Activated B cell treated with CpG ODN at 0.5 μM for 24 hours (primary cell): ENCODE measurements at regions of chr10 and their contacts with region 1.

Region 1: GRCh38 chr10:103995134-103995533 is 28.2 kb downstream of the SLK start:
- DNase-seq: no peak
- ATAC-seq: no peak
- H3K4me3 Mint-ChIP-seq: no peak overlapping the region
- H3K27ac Mint-ChIP-seq: no peak overlapping the region
- H3K4me1 Mint-ChIP-seq: peaks cover 1% of the 10 kb centered on the region
- H3K27me3 Mint-ChIP-seq: no peaks in the 10 kb centered on the region
- CTCF ChIP-seq: no peak

Region 2: GRCh38 chr10:103911021-103911459 is 84.1 kb before region 1 on chr10:
- CTCF ChIA-PET with region 1: no interaction called
- POLR2A ChIA-PET with region 1: interaction called, 14 read pairs
- intact Hi-C with region 1: no loop called
- DNase-seq: no peak
- ATAC-seq: peak; percentile 42
- H3K4me3 Mint-ChIP-seq: no peak overlapping the region
- H3K27ac Mint-ChIP-seq: peak overlapping the region; percentile 86
- H3K4me1 Mint-ChIP-seq: peaks cover 53% of the 10 kb centered on the region
- H3K27me3 Mint-ChIP-seq: no peaks in the 10 kb centered on the region
- CTCF ChIP-seq: no peak

Region 3: DNA sequence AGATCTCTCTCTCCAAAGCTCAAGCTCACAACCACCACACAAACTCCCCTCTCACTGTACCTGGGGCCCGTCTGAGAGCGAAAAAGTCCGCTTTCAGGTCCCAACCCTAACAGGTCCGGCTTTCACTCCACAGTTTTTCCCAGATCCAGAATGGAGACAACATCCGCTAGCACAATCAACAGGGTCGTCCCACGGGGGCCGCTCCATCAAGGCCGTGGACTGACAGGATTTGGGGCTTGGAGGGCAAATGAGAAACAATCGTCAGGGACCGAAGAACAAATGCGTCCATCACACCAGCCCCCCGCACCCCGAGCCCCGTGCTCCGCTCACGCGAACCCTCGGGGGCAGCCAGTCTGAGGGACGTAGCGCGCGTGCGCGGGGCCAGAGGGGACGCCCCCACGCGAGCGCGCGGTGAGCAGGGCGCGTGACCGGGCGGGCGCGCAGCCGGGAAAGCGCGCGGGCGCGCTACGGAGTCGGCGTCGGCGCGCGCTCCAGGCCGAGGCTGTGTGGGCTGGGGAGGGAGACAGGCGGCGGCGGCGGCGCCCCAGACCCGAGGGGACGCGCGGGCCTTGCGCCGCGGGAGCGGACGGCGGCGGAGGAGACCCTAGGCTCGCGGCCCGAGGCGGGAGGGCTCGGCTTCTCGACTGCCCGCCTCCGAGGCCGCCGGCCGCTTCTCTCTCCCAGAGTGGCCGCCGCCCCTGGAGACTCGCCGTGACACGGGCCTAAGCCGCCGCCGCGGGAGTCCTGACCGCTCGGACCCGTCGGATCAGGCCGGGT is 28.3 kb before region 1 on chr10 and contains the start of gene SLK:
- CTCF ChIA-PET with region 1: no interaction called
- POLR2A ChIA-PET with region 1: no interaction called
- intact Hi-C with region 1: no loop called
- DNase-seq: peak; percentile 89
- ATAC-seq: peak; percentile 87
- H3K4me3 Mint-ChIP-seq: peak within 1 kb of the TSS; percentile 95
- H3K27ac Mint-ChIP-seq: peak within 1 kb of the TSS; percentile 92
- H3K4me1 Mint-ChIP-seq: peaks cover 42% of the 10 kb centered on the region
- H3K27me3 Mint-ChIP-seq: no peaks in the 10 kb centered on the region
- CTCF ChIP-seq: no peak
- total RNA-seq, gene SLK: 12.8 and 14.0 TPM in 2 replicates

Region 4: DNA sequence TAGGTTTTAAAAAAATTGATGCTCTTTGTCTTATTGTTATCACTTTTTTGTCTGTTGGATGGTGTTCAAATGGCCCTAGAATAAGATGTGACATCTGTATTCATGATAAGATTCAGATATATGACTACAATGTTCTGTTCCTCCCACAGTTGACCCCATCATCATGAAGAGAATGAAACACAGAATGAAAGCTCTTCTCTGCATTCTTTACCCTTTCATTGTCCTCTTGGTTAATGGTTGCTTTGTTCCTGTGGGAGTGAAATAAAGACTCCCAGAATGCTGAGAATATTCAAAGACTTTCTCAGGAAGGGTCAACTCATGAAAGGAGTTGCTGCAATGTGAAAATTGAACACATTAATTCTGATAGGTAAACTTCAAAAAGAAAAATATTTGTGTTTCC is 1661.7 kb after region 1 on chr10:
- CTCF ChIA-PET with region 1: no interaction called
- POLR2A ChIA-PET with region 1: no interaction called
- intact Hi-C with region 1: no loop called
- DNase-seq: no peak
- ATAC-seq: no peak
- H3K4me3 Mint-ChIP-seq: no peak overlapping the region
- H3K27ac Mint-ChIP-seq: no peak overlapping the region
- H3K4me1 Mint-ChIP-seq: no peaks in the 10 kb centered on the region
- H3K27me3 Mint-ChIP-seq: no peaks in the 10 kb centered on the region
- CTCF ChIP-seq: no peak